ENCODE measurements at regions of chr1 and their contacts with region 1.

Region 1: DNA sequence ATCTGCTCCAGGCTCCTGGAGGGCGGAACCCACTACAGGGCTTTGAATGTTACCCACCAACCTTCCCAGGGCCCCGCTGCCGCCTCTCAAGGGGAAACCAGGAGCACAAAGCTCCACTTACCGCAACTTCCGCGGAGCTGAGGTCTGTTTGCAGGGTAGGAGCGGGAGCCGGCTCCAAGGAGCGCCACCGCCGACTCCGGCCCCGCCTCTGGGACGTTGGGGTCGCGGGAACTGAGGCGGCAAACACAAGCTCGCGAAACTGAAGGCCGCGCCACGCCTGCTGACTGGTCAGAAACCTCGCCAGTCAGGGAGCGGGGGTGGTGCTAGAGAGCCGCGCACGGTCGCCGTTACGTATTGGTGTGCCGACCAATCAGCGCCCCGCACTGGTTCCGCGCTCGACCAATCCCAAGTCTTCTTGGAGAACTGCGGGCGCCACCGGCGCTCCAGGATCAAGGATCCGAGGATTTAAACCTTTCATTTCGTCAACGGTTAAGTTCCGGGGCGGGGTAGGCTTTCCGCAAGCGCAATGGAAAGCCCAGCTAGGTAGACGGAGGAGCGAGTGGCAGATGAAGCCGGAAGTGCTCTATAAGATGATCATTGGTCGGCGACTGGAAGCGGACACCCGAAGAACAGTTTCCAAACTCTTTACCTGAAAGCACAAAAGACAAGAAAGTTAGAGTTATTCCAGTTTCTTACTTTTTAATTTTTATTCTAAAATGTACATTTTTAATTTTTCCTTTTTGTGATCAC is at the start of gene STIL:
- DNase-seq: peak; percentile 95 to 98 (median 97)
- H3K4me3 ChIP-seq: peak within 1 kb of the TSS; percentile 49 to 91
- H3K4me3 Mint-ChIP-seq: peak within 1 kb of the TSS; percentile 89 to 100 (median 93)
- H3K27ac ChIP-seq: peak within 1 kb of the TSS; percentile 56
- H3K27ac Mint-ChIP-seq: peak within 1 kb of the TSS; percentile 93 to 99 (median 96)
- H3K4me1 ChIP-seq: peaks cover 5% of the 10 kb centered on the region
- H3K4me1 Mint-ChIP-seq: peaks cover 7 to 22% (median 12%) of the 10 kb centered on the region in 4 donors
- H3K27me3 ChIP-seq: no peaks in the 10 kb centered on the region
- H3K27me3 Mint-ChIP-seq: no peaks in the 10 kb centered on the region
- total RNA-seq, gene STIL: 1.6 to 2.6 TPM

Region 2: GRCh38 chr1:46806271-46807020 is 507.6 kb before region 1 on chr1:
- CTCF ChIA-PET with region 1: no interaction called
- POLR2A ChIA-PET with region 1: no interaction called
- intact Hi-C with region 1: no loop called
- DNase-seq: no peak
- H3K4me3 ChIP-seq: no peak overlapping the region
- H3K4me3 Mint-ChIP-seq: no peak overlapping the region
- H3K27ac ChIP-seq: no peak overlapping the region
- H3K27ac Mint-ChIP-seq: no peak overlapping the region
- H3K4me1 ChIP-seq: no peaks in the 10 kb centered on the region
- H3K4me1 Mint-ChIP-seq: peaks cover 0 to 2% (median 0%) of the 10 kb centered on the region in 4 donors
- H3K27me3 ChIP-seq: no peaks in the 10 kb centered on the region
- H3K27me3 Mint-ChIP-seq: peaks cover 5 to 7% of the 10 kb centered on the region in 2 donors

Region 3: GRCh38 chr1:47333922-47334764 is 20.1 kb after region 1 on chr1:
- CTCF ChIA-PET with region 1: interaction called, 13 read pairs
- POLR2A ChIA-PET with region 1: interaction called, 65 read pairs
- intact Hi-C with region 1: loop called (anchors 1 kb)
- DNase-seq: peak; percentile 74 to 85 (median 79)
- H3K4me3 ChIP-seq: peak overlapping the region; percentile 86 to 99
- H3K4me3 Mint-ChIP-seq: peak overlapping the region; percentile 91 to 94 (median 93)
- H3K27ac ChIP-seq: peak overlapping the region; percentile 88
- H3K27ac Mint-ChIP-seq: peak overlapping the region in 6 of 7 donors; percentile 90 to 96 (median 92)
- H3K4me1 ChIP-seq: peaks cover 40% of the 10 kb centered on the region
- H3K4me1 Mint-ChIP-seq: peaks cover 10 to 28% (median 15%) of the 10 kb centered on the region in 4 donors
- H3K27me3 ChIP-seq: no peaks in the 10 kb centered on the region
- H3K27me3 Mint-ChIP-seq: no peaks in the 10 kb centered on the region

Measured in CD4-positive, alpha-beta memory T cell (primary cell).